HEK293 (cell line): ENCODE measurements at regions of chr4 and their contacts with region 1.

Region 1: GRCh38 chr4:21512353-21512752 is 436.2 kb downstream of the KCNIP4 start:
- H3K4me3 ChIP-seq: no peak overlapping the region
- H3K27ac ChIP-seq: no peak overlapping the region
- H3K4me1 ChIP-seq: no peaks in the 10 kb centered on the region
- CTCF ChIP-seq: no peak

Region 2: GRCh38 chr4:21765810-21766407 is 253.6 kb after region 1 on chr4:
- CTCF ChIA-PET with region 1: interaction called, 147 read pairs
- POLR2A ChIA-PET with region 1: no interaction called
- H3K4me3 ChIP-seq: no peak overlapping the region
- H3K27ac ChIP-seq: no peak overlapping the region
- H3K4me1 ChIP-seq: no peaks in the 10 kb centered on the region
- CTCF ChIP-seq: peak; percentile 29; the same call in 1 of the 2 replicates